ENCODE measurements at regions of chr10 and their contacts with region 1.

Region 1: GRCh38 chr10:48608279-48608681 is 3.4 kb upstream of the ARHGAP22 start:
- DNase-seq: peak; percentile 48
- ATAC-seq: peak; percentile 83
- H3K4me3 ChIP-seq: no peak overlapping the region
- H3K27ac ChIP-seq: no peak overlapping the region
- H3K4me1 ChIP-seq: peaks cover 14% of the 10 kb centered on the region
- H3K27me3 ChIP-seq: no peaks in the 10 kb centered on the region; a peak in 1 of 4 replicates
- CTCF ChIP-seq: peak; percentile 88 to 94 (median 89)
- EP300 ChIP-seq: no peak
- POLR2A ChIP-seq: no peak
- RAD21 ChIP-seq: peak; percentile 69

Region 2: GRCh38 chr10:48545462-48546145 is 62.7 kb before region 1 on chr10:
- CTCF ChIA-PET with region 1: interaction called, 35 read pairs
- POLR2A ChIA-PET with region 1: no interaction called
- RAD21 ChIA-PET with region 1: no interaction called
- SMC1A ChIA-PET with region 1: interaction called, 85 read pairs
- in situ Hi-C with region 1: no loop called
- intact Hi-C with region 1: no loop called
- DNase-seq: no peak
- ATAC-seq: no peak
- H3K4me3 ChIP-seq: no peak overlapping the region
- H3K27ac ChIP-seq: no peak overlapping the region
- H3K4me1 ChIP-seq: no peaks in the 10 kb centered on the region
- H3K27me3 ChIP-seq: no peaks in the 10 kb centered on the region
- CTCF ChIP-seq: no peak
- EP300 ChIP-seq: no peak
- POLR2A ChIP-seq: no peak
- RAD21 ChIP-seq: no peak

Region 3: DNA sequence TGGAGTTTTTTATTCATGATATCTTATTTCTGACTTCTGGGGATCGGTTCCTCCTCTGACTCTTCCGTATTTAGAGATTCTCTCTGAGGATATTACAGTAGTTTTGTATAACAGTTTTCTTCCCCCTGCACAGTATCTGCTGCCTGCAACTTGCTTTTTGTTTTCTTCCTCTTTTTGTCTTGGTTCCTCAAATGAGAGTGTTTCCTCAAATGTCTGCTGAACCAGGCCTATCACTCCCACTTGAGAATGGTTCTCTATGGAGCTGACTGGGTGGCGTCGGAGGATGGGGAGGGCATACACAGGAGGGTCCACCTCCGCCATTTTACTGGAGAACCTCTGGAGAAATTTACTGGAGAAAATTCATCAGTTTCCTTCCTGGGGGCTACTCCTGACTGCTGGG is 31.1 kb before region 1 on chr10:
- CTCF ChIA-PET with region 1: interaction called, 29 read pairs
- POLR2A ChIA-PET with region 1: interaction called, 7 read pairs
- RAD21 ChIA-PET with region 1: interaction called, 7 read pairs
- SMC1A ChIA-PET with region 1: interaction called, 7 read pairs
- in situ Hi-C with region 1: no loop called
- intact Hi-C with region 1: no loop called
- DNase-seq: no peak
- ATAC-seq: peak; percentile 68
- H3K4me3 ChIP-seq: no peak overlapping the region
- H3K27ac ChIP-seq: peak overlapping the region; percentile 43; the same call in 1 of the 2 replicates
- H3K4me1 ChIP-seq: peaks cover 34% of the 10 kb centered on the region
- H3K27me3 ChIP-seq: no peaks in the 10 kb centered on the region
- CTCF ChIP-seq: no peak
- EP300 ChIP-seq: no peak
- POLR2A ChIP-seq: no peak
- RAD21 ChIP-seq: no peak

Region 4: GRCh38 chr10:48623607-48624132 is 15.4 kb after region 1 on chr10:
- CTCF ChIA-PET with region 1: interaction called, 175 read pairs
- POLR2A ChIA-PET with region 1: interaction called, 10 read pairs
- RAD21 ChIA-PET with region 1: interaction called, 25 read pairs
- SMC1A ChIA-PET with region 1: interaction called, 76 read pairs
- in situ Hi-C with region 1: no loop called
- intact Hi-C with region 1: no loop called
- DNase-seq: no peak
- ATAC-seq: no peak
- H3K4me3 ChIP-seq: no peak overlapping the region
- H3K27ac ChIP-seq: no peak overlapping the region
- H3K4me1 ChIP-seq: peaks cover 4% of the 10 kb centered on the region; the same call in 1 of the 2 replicates
- H3K27me3 ChIP-seq: no peaks in the 10 kb centered on the region
- CTCF ChIP-seq: no peak
- EP300 ChIP-seq: no peak
- POLR2A ChIP-seq: no peak
- RAD21 ChIP-seq: no peak

Region 5: GRCh38 chr10:48649349-48649944 is 41.2 kb after region 1 on chr10:
- CTCF ChIA-PET with region 1: interaction called, 664 read pairs
- POLR2A ChIA-PET with region 1: interaction called, 6 read pairs
- RAD21 ChIA-PET with region 1: interaction called, 383 read pairs
- SMC1A ChIA-PET with region 1: interaction called, 298 read pairs
- in situ Hi-C with region 1: no loop called
- intact Hi-C with region 1: loop called (anchors 1 kb)
- DNase-seq: no peak
- ATAC-seq: peak; percentile 36; the same call in 2 of the 3 replicates
- H3K4me3 ChIP-seq: no peak overlapping the region
- H3K27ac ChIP-seq: no peak overlapping the region
- H3K4me1 ChIP-seq: peaks cover 7% of the 10 kb centered on the region; the same call in 1 of the 2 replicates
- H3K27me3 ChIP-seq: no peaks in the 10 kb centered on the region
- CTCF ChIP-seq: peak; percentile 3 to 24 (median 23); a peak in 2 of 6 replicates
- EP300 ChIP-seq: no peak
- POLR2A ChIP-seq: no peak
- RAD21 ChIP-seq: no peak

Region 6: DNA sequence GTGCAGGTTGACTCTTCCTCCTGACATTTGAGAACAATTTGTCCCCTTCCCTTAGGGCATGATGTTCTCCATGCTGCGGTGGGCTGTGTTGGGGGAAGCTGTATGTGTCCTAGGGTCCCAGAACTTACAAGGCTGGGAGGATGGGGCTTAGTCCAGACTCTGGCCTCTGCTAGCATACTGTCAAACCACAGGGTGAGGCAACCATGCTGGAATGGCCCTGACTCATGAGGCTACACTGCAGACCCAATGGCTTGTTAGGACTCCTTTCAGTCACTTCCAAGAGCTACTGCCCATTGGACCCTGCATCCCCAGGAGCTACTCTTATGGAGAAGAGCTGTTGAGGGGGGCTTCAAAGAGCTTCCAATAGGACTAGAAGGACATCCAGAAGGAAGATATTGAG is 545.7 kb after region 1 on chr10:
- CTCF ChIA-PET with region 1: no interaction called
- POLR2A ChIA-PET with region 1: no interaction called
- RAD21 ChIA-PET with region 1: no interaction called
- SMC1A ChIA-PET with region 1: no interaction called
- in situ Hi-C with region 1: no loop called
- intact Hi-C with region 1: no loop called
- DNase-seq: no peak
- ATAC-seq: no peak
- H3K4me3 ChIP-seq: no peak overlapping the region
- H3K27ac ChIP-seq: no peak overlapping the region
- H3K4me1 ChIP-seq: no peaks in the 10 kb centered on the region
- H3K27me3 ChIP-seq: no peaks in the 10 kb centered on the region
- CTCF ChIP-seq: no peak
- EP300 ChIP-seq: no peak
- POLR2A ChIP-seq: no peak
- RAD21 ChIP-seq: no peak

Measured in GM12878 (cell line).